Activated CD4-positive, alpha-beta memory T cell treated with anti-CD3 and anti-CD28 coated beads, Interleukin-2, amount 10 ng/mL, durations not matched to agents 7 days and 5 days (primary cell): ENCODE measurements at regions of chr12 and their contacts with region 1.

Region 1: DNA sequence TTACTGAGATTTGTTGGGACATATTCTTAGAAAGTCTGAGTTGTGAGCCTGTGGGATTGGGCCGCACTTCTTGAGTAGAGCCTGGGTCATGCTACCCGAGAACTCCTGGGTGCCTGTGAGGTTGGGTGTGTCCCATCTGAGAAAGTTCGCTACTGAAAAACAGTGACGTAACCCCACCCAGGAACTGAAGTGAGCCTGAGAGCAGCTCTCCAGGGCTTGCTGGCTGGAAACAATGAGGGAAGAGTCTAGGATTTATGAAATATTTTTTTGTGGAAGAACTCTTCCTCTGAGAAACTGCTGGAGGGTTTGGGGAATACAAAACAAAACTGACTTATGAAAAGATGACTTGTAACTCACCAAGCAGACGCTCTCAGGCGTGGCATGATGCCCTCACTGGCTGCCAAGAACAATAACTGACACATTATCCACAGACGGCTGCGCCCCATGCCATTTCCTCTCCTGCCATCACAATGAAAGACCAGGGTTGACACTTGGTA is 69.2 kb downstream of the RASSF3 start:
- DNase-seq: peak; percentile 73
- H3K4me3 Mint-ChIP-seq: peak overlapping the region; percentile 62
- H3K27ac Mint-ChIP-seq: peak overlapping the region; percentile 95
- H3K4me1 Mint-ChIP-seq: peaks cover 95% of the 10 kb centered on the region
- H3K27me3 Mint-ChIP-seq: no peaks in the 10 kb centered on the region

Region 2: GRCh38 chr12:64660237-64661018 is 19.1 kb before region 1 on chr12:
- CTCF ChIA-PET with region 1: interaction called, 8 read pairs
- POLR2A ChIA-PET with region 1: interaction called, 301 read pairs
- DNase-seq: no peak
- H3K4me3 Mint-ChIP-seq: no peak overlapping the region
- H3K27ac Mint-ChIP-seq: peak overlapping the region; percentile 61
- H3K4me1 Mint-ChIP-seq: peaks cover 72% of the 10 kb centered on the region
- H3K27me3 Mint-ChIP-seq: no peaks in the 10 kb centered on the region